ENCODE measurements at regions of chr9 and their contacts with region 1.

Region 1: DNA sequence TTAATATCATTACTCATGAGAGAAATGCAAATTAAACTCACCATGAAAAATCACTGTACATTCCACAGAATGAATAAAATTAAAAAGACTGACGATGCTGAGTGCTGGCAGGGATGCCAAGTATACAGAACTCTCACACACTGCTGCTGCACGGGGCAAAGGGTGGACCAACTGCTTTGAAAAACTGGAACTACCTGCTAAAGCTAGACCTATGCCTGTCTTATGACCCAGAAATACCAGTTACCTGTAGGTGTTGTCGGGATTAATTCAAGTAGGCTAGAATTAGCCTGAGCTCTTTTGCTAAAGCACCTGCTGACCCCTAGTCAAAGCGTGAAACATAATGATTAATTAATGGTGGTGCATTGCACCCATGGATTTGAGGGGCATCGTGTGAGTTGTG is 36.5 kb upstream of the ANKRD18A start:
- DNase-seq: no peak
- ATAC-seq: no peak
- H3K4me3 ChIP-seq: no peak overlapping the region
- H3K4me3 Mint-ChIP-seq: no peak overlapping the region
- H3K27ac ChIP-seq: no peak overlapping the region
- H3K27ac Mint-ChIP-seq: no peak overlapping the region
- H3K4me1 ChIP-seq: no peaks in the 10 kb centered on the region
- H3K4me1 Mint-ChIP-seq: no peaks in the 10 kb centered on the region
- H3K27me3 ChIP-seq: no peaks in the 10 kb centered on the region
- H3K27me3 Mint-ChIP-seq: peaks cover 12% of the 10 kb centered on the region
- CTCF ChIP-seq: no peak

Region 2: GRCh38 chr9:38638893-38639580 is 17.9 kb before region 1 on chr9:
- CTCF ChIA-PET with region 1: interaction called, 3 read pairs
- POLR2A ChIA-PET with region 1: no interaction called
- intact Hi-C with region 1: loop called in 1 of 2 experiments (anchors 1 kb)
- DNase-seq: no peak
- ATAC-seq: no peak
- H3K4me3 ChIP-seq: no peak overlapping the region
- H3K4me3 Mint-ChIP-seq: no peak overlapping the region
- H3K27ac ChIP-seq: no peak overlapping the region
- H3K27ac Mint-ChIP-seq: no peak overlapping the region
- H3K4me1 ChIP-seq: no peaks in the 10 kb centered on the region
- H3K4me1 Mint-ChIP-seq: no peaks in the 10 kb centered on the region
- H3K27me3 ChIP-seq: no peaks in the 10 kb centered on the region
- H3K27me3 Mint-ChIP-seq: peaks cover 7% of the 10 kb centered on the region
- CTCF ChIP-seq: no peak

Measured in CD8-positive, alpha-beta T cell (primary cell).